Activated CD4-positive, alpha-beta T cell treated with anti-CD3 and anti-CD28 coated beads, Interleukin-2, amount 10 ng/mL, durations not matched to agents 24 days and 14 days (primary cell): ENCODE measurements at regions of chr2 and their contacts with region 1.

Region 1: DNA sequence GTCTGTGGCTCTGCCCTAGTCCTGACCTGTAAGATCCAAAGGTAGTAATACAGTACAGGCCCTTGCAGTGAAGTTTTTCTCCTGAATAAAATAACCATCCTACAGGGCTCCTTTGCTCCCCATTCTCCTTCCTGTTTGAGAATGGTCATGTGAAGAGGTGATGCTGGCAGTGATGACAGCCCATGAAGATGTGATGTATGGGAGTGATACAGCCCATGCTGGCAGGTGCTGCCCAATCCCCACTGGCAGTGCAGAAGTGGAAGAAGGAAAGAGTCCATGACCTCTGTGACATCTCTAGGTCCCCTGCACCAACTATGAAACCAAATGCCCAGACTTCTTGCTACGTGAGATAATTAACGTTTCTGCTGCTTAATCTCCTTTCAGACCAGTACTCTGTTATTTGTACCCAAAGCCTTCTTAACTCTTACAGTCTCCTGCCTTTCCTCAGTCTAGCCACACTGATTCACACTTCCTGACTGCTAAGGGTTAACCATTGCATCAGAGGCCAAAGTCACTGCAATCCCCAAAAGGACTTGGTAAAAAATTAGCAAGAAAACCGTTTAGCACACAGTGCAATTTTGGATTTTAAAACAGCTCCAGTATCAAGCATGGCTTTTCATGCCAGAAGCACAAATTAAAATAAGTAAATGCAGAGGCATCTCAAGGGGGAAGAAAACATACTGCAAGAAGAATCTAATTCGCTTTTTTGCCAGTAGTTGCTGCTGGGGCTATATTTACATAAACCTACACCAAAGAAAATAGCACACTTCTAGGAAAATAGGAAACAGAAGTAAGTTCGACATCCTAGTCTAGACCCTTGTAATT is 98.0 kb downstream of the STK39 start:
- DNase-seq: no peak
- H3K4me3 Mint-ChIP-seq: no peak overlapping the region
- H3K27ac Mint-ChIP-seq: no peak overlapping the region
- H3K4me1 Mint-ChIP-seq: peaks cover 8% of the 10 kb centered on the region
- H3K27me3 Mint-ChIP-seq: no peaks in the 10 kb centered on the region

Region 2: GRCh38 chr2:167992278-167992677 is 157.1 kb before region 1 on chr2:
- intact Hi-C with region 1: no loop called
- DNase-seq: no peak
- H3K4me3 Mint-ChIP-seq: no peak overlapping the region
- H3K27ac Mint-ChIP-seq: no peak overlapping the region
- H3K4me1 Mint-ChIP-seq: peaks cover 10% of the 10 kb centered on the region
- H3K27me3 Mint-ChIP-seq: no peaks in the 10 kb centered on the region

Region 3: DNA sequence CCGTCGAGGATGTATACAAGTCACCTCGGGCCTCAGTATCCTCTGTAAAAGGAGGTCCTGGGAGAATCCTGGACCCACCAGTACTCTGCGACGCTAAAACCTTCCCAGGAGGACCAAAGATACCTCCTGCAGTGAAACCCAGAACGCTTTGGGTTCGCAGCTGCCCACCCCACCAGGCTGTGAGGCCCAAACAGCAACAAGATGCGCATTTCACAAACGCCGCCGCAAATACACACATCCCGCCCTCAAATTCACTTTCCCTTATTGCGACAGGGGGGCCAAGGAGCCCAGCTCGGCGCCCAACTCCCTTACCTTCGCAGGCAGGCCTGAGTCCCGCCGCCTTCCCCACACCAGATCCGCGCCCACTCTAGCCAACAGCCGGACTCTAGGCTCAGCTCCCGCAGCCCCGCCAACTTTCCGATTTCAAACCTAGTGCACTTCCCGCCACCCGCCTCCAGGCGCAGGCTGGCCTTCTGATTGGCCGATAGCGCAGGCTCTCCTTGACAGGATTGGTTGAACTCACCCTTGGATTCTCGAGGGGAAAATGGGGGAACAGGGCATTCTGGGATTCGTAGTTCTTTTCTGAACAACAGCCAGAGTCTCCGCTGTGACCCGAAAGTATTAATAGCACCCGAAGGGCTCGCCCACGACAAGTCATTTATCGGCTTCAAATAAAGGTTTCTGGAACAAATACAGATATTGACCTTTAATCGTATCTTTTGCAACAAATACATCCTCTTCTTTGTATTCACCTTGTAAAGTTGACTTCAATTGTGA is 740.8 kb after region 1 on chr2 and contains the start of gene SPC25:
- intact Hi-C with region 1: loop called (anchors 10 kb)
- DNase-seq: peak; percentile 97
- H3K4me3 Mint-ChIP-seq: peak within 1 kb of the TSS; percentile 93
- H3K27ac Mint-ChIP-seq: peak within 1 kb of the TSS; percentile 93
- H3K4me1 Mint-ChIP-seq: peaks cover 20% of the 10 kb centered on the region
- H3K27me3 Mint-ChIP-seq: peaks cover 31% of the 10 kb centered on the region
- total RNA-seq, gene SPC25: 22.5 and 22.8 TPM in 2 replicates